Heart left ventricle (tissue), 16 donors: ENCODE measurements at regions of chrX and their contacts with region 1.

Region 1: DNA sequence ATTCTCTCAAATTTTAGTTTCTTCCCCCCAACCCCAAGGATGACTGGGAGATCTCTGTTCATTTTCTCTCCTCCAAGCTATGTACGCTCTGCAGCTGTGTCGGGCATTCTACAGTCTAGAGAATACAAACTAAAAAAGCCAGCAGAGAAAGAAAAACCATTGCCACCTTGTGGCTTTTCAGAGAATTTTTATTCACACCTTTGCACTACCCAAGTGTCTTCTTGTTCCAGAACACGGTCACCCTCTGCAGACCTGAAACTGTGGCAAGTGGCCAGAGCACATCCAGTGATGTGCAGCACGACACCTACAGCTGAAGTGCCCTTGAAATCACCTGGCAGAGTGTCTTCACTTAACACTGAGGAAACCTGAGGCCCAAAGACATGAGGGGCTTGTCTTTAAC is 68.6 kb downstream of the CHST7 start:
- DNase-seq: peak in 2 of 5 donors; percentile 17 to 37
- ATAC-seq: peak; percentile 83 to 93 (median 86)
- H3K4me3 ChIP-seq: no peak overlapping the region
- H3K27ac ChIP-seq: no peak overlapping the region
- H3K4me1 ChIP-seq: peaks cover 0 to 3% (median 0%) of the 10 kb centered on the region in 12 donors
- H3K27me3 ChIP-seq: peaks cover 0 to 3% (median 0%) of the 10 kb centered on the region in 9 donors
- CTCF ChIP-seq: peak; percentile 23 to 68 (median 52)
- POLR2A ChIP-seq: no peak

Region 2: GRCh38 chrX:46561824-46562657 is 80.1 kb before region 1 on chrX:
- intact Hi-C with region 1: loop called in 4 of 10 experiments (anchors 1 to 5 kb)
- DNase-seq: peak in 1 of 5 donors; percentile 33
- ATAC-seq: peak in 3 of 4 donors; percentile 44 to 75 (median 73)
- H3K4me3 ChIP-seq: no peak overlapping the region
- H3K27ac ChIP-seq: no peak overlapping the region
- H3K4me1 ChIP-seq: peaks cover 0 to 5% (median 0%) of the 10 kb centered on the region in 12 donors
- H3K27me3 ChIP-seq: no peaks in the 10 kb centered on the region
- CTCF ChIP-seq: no peak
- POLR2A ChIP-seq: no peak

Region 3: DNA sequence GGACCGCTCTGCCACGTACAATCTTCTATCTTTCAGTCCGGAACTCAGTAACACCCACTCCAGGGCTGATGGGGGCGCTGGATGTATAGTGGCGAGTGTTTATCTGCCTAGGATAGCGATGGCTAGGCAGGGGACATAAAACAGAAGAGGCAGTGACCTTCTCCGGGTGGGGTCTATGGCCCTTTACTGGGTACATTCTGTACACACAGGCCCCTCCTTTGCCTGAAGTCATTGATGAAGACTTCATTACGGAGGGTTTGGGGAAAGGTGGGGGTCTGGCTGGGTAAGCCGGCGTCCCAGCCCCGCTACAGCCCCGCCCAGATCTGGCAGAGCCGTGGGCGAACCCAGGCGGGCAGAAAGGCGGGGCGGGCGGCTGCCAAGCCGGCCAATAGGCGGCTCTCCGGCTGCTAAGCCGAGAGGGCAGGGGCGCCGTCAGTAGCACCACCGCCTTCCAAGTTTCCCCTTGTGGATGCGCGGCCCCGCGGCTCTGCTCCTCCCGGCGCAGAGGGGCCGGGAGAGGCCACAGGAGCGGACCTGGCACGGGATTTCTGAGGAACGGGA is 68.7 kb before region 1 on chrX and contains the start of gene CHST7:
- intact Hi-C with region 1: loop called (anchors 1 to 5 kb)
- DNase-seq: peak; percentile 68 to 87 (median 80)
- ATAC-seq: peak; percentile 74 to 85 (median 84)
- H3K4me3 ChIP-seq: peak within 1 kb of the TSS; percentile 33 to 89 (median 67)
- H3K27ac ChIP-seq: peak within 1 kb of the TSS; percentile 70 to 85 (median 81)
- H3K4me1 ChIP-seq: peaks cover 0 to 21% (median 7%) of the 10 kb centered on the region in 12 donors
- H3K27me3 ChIP-seq: no peaks in the 10 kb centered on the region
- CTCF ChIP-seq: peak in 9 of 12 donors; percentile 6 to 53 (median 24)
- POLR2A ChIP-seq: peak in 1 of 2 donors; percentile 79
- total RNA-seq, gene CHST7: 5.0 to 41.8 (median 15.0) TPM

Region 4: GRCh38 chrX:46588263-46588662 is 53.9 kb before region 1 on chrX:
- intact Hi-C with region 1: no loop called
- DNase-seq: peak in 4 of 5 donors; percentile 55 to 70 (median 60)
- ATAC-seq: peak; percentile 35 to 77 (median 72)
- H3K4me3 ChIP-seq: peak overlapping the region in 5 of 12 donors; percentile 2 to 33 (median 8)
- H3K27ac ChIP-seq: peak overlapping the region in 11 of 12 donors; percentile 38 to 79 (median 61)
- H3K4me1 ChIP-seq: peaks cover 3 to 68% (median 37%) of the 10 kb centered on the region in 12 donors
- H3K27me3 ChIP-seq: no peaks in the 10 kb centered on the region
- CTCF ChIP-seq: no peak
- POLR2A ChIP-seq: no peak